SK-N-SH (cell line): ENCODE measurements at regions of chr17 and their contacts with region 1.

Region 1: GRCh38 chr17:72725433-72726068 is 366.9 kb downstream of the SLC39A11 start:
- DNase-seq: peak; percentile 78
- H3K4me3 ChIP-seq: no peak overlapping the region
- H3K27ac ChIP-seq: no peak overlapping the region
- H3K4me1 ChIP-seq: no peaks in the 10 kb centered on the region
- H3K27me3 ChIP-seq: no peaks in the 10 kb centered on the region
- CTCF ChIP-seq: peak; percentile 100
- EP300 ChIP-seq: no peak
- RAD21 ChIP-seq: peak; percentile 99

Region 2: DNA sequence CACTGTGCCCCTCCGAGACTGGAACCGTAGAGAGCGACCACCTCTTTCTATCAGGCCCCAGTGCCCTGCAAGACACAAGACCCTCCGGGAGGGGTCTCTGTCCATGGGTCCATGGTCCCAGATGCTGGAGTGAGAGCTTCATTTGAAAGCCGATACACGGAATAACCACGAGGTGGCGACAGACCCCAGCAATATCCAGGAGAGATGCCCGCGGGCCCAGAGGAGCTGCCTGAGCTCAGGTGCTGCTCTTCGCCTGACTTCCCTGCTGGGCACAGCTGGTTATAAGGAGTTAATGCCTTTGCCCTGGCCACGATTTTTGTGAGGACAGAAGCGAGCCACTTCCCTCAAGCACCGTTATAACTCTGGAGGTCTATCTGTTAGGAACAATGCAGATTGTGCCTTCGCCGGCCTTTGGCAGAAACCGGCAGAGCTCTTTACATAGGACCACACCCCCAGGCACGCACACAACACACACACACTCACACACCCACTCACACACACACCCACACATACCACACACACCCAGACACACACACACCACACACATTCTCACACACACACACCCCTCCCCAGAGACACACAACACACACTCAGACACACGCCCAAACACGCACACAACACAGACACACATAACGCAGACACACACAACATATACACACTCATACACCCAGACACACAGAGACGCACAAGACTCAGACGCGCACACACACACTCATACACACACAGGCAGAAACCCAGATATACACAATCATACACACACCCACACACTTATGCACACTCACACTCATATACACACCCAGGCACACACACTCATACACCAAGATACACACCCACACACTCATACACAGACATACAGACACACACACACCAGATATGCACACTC is 168.4 kb before region 1 on chr17:
- CTCF ChIA-PET with region 1: interaction called, 317 read pairs
- POLR2A ChIA-PET with region 1: interaction called, 3 read pairs
- DNase-seq: peak; percentile 91
- H3K4me3 ChIP-seq: no peak overlapping the region; a peak in 1 of 4 replicates
- H3K27ac ChIP-seq: no peak overlapping the region
- H3K4me1 ChIP-seq: no peaks in the 10 kb centered on the region
- H3K27me3 ChIP-seq: no peaks in the 10 kb centered on the region
- CTCF ChIP-seq: peak; percentile 98
- EP300 ChIP-seq: no peak
- RAD21 ChIP-seq: peak; percentile 93

Region 3: DNA sequence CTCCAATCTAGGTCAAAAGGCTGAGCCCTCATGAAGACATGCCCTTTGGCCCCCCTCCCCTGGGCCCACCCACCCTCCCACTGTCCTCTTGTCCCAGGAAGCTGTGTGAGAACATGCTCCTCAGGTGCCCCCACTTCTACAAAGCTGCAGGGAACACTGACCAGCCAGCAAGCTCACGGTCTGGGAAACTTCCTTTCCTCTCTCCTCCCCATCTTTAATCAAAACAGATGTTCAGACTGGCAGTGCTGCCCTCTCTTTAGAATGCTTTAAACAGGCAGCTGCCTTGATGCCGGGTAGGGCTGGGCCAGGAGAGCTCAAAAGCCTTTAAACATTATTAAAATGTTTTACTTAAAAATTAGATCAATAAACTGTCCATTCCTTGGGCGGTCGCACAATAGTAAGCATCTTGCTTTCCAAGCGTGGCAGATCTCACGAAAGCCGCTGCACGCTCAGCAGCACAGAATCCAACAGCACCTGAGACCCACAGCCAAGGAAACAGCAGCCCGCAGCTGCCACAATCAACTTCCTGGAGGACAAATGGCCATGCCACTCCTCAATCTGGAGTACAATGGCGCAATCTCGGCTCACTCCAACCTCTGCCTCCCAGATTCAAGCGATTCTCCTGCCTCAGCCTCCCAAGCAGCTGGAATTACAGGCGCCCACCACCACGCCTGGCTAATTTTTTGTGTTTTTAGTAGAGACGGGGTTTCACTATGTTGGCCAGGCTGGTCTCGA is 32.2 kb before region 1 on chr17:
- CTCF ChIA-PET with region 1: interaction called, 39 read pairs
- POLR2A ChIA-PET with region 1: no interaction called
- DNase-seq: peak; percentile 74
- H3K4me3 ChIP-seq: no peak overlapping the region
- H3K27ac ChIP-seq: peak overlapping the region; percentile 74 to 91
- H3K4me1 ChIP-seq: peaks cover 23 to 29% of the 10 kb centered on the region in 2 experiments; a peak in 3 of 4 replicates
- H3K27me3 ChIP-seq: no peaks in the 10 kb centered on the region
- CTCF ChIP-seq: no peak
- EP300 ChIP-seq: no peak
- RAD21 ChIP-seq: no peak

Region 4: DNA sequence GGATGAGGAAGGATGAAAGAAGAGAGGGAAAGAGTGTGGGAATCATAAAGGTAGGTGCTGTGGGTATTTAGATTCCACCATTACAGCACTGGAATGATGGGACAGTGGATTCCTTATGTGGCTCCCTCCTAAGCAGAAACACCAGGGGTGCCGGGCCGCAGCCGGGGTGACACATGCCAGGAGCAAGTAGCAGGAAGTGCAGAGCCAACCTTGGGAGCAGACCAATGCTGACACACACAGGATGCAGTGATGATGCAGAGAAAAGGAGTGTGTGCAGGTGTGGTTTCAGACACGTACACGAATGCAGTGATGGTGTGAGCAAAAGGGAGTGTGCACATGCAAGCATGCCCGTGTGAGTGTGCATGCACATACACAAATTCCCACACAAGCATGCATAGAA is 29.0 kb after region 1 on chr17:
- CTCF ChIA-PET with region 1: interaction called, 16 read pairs
- POLR2A ChIA-PET with region 1: no interaction called
- DNase-seq: no peak
- H3K4me3 ChIP-seq: no peak overlapping the region
- H3K27ac ChIP-seq: no peak overlapping the region
- H3K4me1 ChIP-seq: no peaks in the 10 kb centered on the region
- H3K27me3 ChIP-seq: no peaks in the 10 kb centered on the region
- CTCF ChIP-seq: no peak
- EP300 ChIP-seq: no peak
- RAD21 ChIP-seq: no peak

Region 5: GRCh38 chr17:72952220-72952984 is 226.9 kb after region 1 on chr17:
- CTCF ChIA-PET with region 1: interaction called, 13 read pairs
- POLR2A ChIA-PET with region 1: no interaction called
- DNase-seq: no peak
- H3K4me3 ChIP-seq: no peak overlapping the region
- H3K27ac ChIP-seq: no peak overlapping the region
- H3K4me1 ChIP-seq: peaks cover 13 to 18% of the 10 kb centered on the region in 2 experiments; a peak in 3 of 4 replicates
- H3K27me3 ChIP-seq: no peaks in the 10 kb centered on the region
- CTCF ChIP-seq: no peak
- EP300 ChIP-seq: no peak
- RAD21 ChIP-seq: no peak

Region 6: DNA sequence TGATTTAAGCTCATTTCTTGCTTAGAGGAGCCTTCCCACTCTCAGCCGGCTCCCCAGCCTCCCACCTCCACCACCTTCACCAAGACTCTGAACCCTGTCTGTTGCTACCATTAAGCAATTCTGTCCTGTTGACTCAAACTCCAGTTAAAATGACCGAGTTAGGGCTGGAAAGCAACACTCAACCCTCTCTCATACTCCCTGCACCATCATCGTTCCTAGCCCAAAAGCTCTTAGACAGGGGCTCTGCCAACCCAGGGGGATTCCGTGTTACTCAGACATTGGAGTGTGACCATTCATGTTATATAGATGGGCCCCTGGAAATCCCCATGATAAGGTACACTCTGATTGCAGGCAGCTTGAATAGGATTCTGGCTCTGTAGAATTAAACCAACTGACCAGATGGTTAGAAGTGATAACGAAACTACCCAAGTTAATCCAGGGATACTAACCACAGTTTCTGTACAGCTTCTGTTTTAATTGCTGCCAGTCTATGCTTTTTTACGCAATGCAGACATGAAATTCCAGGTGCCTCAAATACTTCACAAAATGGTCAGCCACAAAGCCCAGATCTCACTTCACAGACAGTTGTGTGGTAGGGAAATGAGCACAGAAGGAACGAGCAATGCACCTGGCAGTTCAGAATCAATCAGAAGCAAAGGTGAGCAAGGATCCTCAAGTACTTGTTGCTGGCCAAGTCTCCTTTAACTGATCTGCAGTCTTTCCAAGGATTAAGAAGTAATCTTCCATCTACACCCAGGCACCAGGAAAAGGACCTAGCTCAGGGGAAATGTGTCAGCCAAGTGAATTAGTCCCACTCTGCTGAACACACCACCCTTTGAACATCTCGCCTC is 441.4 kb after region 1 on chr17:
- CTCF ChIA-PET with region 1: interaction called, 146 read pairs
- POLR2A ChIA-PET with region 1: no interaction called
- DNase-seq: no peak
- H3K4me3 ChIP-seq: 0 out of 4 replicates have a peak overlapping the region, but pooled peaks of 1 of the 2 experiments have one; percentile 45
- H3K27ac ChIP-seq: no peak overlapping the region
- H3K4me1 ChIP-seq: peaks cover 0 to 22% of the 10 kb centered on the region in 2 experiments; a peak in 1 of 4 replicates
- H3K27me3 ChIP-seq: peaks cover 34% of the 10 kb centered on the region
- CTCF ChIP-seq: no peak
- EP300 ChIP-seq: no peak
- RAD21 ChIP-seq: no peak

Region 7: GRCh38 chr17:73247726-73248125 is 522.2 kb after region 1 on chr17:
- CTCF ChIA-PET with region 1: interaction called, 69 read pairs
- POLR2A ChIA-PET with region 1: no interaction called
- DNase-seq: no peak
- H3K4me3 ChIP-seq: no peak overlapping the region
- H3K27ac ChIP-seq: no peak overlapping the region
- H3K4me1 ChIP-seq: no peaks in the 10 kb centered on the region
- H3K27me3 ChIP-seq: no peaks in the 10 kb centered on the region
- CTCF ChIP-seq: peak; percentile 41
- EP300 ChIP-seq: no peak
- RAD21 ChIP-seq: no peak